Mammary epithelial cell (primary cell): ENCODE measurements at regions of chr18 and their contacts with region 1.

Region 1: GRCh38 chr18:39841482-39842365 is 2113.3 kb upstream of the PIK3C3 start:
- DNase-seq: peak; percentile 63
- H3K4me3 ChIP-seq: peak overlapping the region; percentile 63 to 76 (median 66)
- H3K27ac ChIP-seq: no peak overlapping the region
- H3K4me1 ChIP-seq: peaks cover 19% of the 10 kb centered on the region
- H3K27me3 ChIP-seq: peaks cover under 1% of the 10 kb centered on the region
- CTCF ChIP-seq: peak; percentile 28 to 74

Region 2: GRCh38 chr18:38545071-38545470 is 1296.7 kb before region 1 on chr18:
- CTCF ChIA-PET with region 1: no interaction called
- dilution Hi-C with region 1: no loop called
- in situ Hi-C with region 1: no loop called
- intact Hi-C with region 1: loop called (anchors 2 kb)
- DNase-seq: peak; percentile 77
- H3K4me3 ChIP-seq: no peak overlapping the region
- H3K27ac ChIP-seq: no peak overlapping the region
- H3K4me1 ChIP-seq: peaks cover 7% of the 10 kb centered on the region
- H3K27me3 ChIP-seq: no peaks in the 10 kb centered on the region
- CTCF ChIP-seq: peak; percentile 87 to 88

Region 3: DNA sequence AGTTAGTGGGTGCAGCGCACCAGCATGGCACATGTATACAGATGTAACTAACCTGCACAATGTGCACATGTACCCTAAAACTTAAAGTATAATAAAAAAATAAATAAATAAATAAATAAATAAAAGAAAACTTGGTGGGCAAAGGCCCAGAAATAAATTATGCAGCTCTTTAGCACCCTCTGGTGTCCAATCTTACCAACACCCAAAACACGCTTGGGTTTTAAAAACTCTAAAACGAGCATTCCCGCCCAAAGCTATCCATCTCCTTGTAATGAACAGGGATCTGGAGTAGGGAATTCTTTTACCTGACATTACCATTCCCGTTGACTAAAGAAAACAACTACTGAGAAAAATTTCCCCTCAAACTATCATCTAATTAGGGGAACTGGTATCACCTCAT is 270.2 kb before region 1 on chr18:
- CTCF ChIA-PET with region 1: no interaction called
- dilution Hi-C with region 1: no loop called
- in situ Hi-C with region 1: no loop called
- intact Hi-C with region 1: loop called (anchors 5 kb)
- DNase-seq: no peak
- H3K4me3 ChIP-seq: no peak overlapping the region
- H3K27ac ChIP-seq: no peak overlapping the region
- H3K4me1 ChIP-seq: no peaks in the 10 kb centered on the region
- H3K27me3 ChIP-seq: no peaks in the 10 kb centered on the region
- CTCF ChIP-seq: peak; percentile 12 to 47

Region 4: DNA sequence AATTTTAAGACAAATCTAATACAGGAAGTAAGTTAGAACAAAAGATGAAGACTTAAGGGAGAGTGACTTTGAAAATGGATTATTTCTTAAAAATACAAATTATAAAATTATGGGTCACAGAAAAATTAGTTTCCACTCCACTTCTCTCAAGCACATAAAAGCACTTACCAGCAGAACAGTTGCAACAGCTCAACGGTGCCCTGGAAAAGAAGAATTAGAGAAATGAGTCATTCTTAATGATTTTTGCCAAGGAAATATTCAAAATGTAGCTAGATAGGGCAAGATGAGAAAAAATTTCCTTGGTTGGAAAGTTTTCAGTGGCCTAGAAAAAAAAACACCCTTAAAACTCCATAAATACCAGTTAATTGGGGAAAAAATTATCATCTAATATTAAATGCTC is 90.6 kb before region 1 on chr18:
- CTCF ChIA-PET with region 1: interaction called, 11 read pairs
- dilution Hi-C with region 1: no loop called
- in situ Hi-C with region 1: no loop called
- intact Hi-C with region 1: no loop called
- DNase-seq: no peak
- H3K4me3 ChIP-seq: no peak overlapping the region
- H3K27ac ChIP-seq: no peak overlapping the region
- H3K4me1 ChIP-seq: no peaks in the 10 kb centered on the region
- H3K27me3 ChIP-seq: no peaks in the 10 kb centered on the region
- CTCF ChIP-seq: no peak

Region 5: DNA sequence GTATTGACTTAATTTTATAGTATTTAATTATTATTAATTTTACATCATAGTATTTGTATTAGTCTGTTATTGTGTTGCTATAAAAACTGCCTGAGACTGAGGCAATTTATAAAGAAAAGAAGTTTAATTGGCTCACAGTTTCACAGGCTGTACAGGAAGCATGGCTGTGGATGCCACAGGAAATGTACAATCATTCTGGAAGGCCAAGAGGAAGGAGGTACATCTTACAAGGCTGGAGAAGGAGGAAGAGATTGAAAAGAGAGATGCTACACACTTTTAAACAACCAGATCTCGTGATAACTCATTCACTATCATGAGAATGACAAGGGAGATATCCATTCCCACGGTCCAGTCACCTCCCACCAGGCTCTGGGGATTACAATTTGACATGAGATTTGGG is 93.9 kb after region 1 on chr18:
- CTCF ChIA-PET with region 1: no interaction called
- dilution Hi-C with region 1: no loop called
- in situ Hi-C with region 1: no loop called
- intact Hi-C with region 1: no loop called
- DNase-seq: no peak
- H3K4me3 ChIP-seq: no peak overlapping the region
- H3K27ac ChIP-seq: no peak overlapping the region
- H3K4me1 ChIP-seq: no peaks in the 10 kb centered on the region
- H3K27me3 ChIP-seq: no peaks in the 10 kb centered on the region
- CTCF ChIP-seq: no peak

Region 6: DNA sequence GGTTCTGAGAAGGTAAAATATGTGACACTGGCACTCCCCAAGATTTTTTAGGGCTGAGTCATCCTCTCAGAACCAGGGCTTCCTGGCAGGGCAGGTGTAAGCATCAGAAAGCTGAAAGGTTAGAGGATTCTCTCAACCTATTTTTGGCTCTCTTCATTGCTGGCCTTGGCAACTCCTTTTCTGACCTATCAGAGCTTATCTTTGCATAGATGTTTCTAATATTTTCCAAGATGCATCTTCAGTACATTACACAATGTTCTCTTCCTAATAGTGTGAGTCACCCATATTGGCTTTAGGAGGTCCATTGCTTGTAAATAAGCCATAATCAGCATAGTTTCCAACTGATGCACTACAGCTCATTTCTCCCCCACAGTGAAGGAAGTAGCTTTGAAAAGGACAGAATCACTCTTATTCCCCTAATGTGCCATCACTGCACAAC is 104.9 kb after region 1 on chr18:
- CTCF ChIA-PET with region 1: no interaction called
- dilution Hi-C with region 1: no loop called
- in situ Hi-C with region 1: no loop called
- intact Hi-C with region 1: no loop called
- DNase-seq: peak; percentile 85
- H3K4me3 ChIP-seq: no peak overlapping the region
- H3K27ac ChIP-seq: peak overlapping the region; percentile 85
- H3K4me1 ChIP-seq: peaks cover 34% of the 10 kb centered on the region
- H3K27me3 ChIP-seq: no peaks in the 10 kb centered on the region
- CTCF ChIP-seq: no peak

Region 7: DNA sequence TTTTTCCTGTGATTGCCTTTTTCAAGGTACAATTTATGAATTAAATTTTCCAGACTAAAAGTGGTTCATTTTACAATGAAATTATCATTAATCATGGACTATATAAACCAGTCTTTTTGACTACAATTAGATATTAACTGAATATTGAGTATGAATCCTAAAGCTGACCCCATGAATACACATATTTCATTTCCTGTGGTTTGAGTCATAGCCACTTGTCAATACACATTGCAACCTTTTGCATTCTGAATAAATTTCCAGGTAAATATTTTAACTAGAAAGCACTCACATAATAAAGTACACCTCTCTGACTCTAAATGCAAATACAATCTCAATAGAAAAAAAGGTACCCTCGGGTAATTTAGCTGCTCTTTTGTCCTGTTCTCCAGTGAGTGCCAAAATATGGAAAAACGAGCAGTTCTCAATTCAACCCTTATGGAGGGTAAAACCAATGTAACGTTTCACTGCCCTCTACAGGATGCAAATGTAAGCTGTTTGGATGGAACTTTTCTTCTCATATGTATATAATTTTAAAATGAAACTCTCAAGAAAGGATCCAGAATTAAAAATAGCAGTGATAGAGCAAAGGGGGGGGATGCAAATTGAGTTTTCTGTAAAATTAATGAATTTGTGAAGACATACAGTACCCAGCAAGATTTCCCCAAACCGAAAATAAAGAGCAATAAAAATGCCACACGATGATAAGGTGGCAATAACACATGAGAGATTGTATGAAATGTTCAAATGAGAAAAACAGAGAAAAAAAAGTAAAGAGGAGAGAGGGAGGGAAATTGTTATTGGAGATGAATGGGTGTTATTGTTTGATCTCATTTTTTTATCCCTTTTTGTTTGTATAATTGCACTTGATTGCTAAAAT is 317.7 kb after region 1 on chr18:
- CTCF ChIA-PET with region 1: no interaction called
- dilution Hi-C with region 1: no loop called
- in situ Hi-C with region 1: no loop called
- intact Hi-C with region 1: loop called (anchors 2 kb)
- DNase-seq: peak; percentile 34
- H3K4me3 ChIP-seq: no peak overlapping the region
- H3K27ac ChIP-seq: no peak overlapping the region
- H3K4me1 ChIP-seq: no peaks in the 10 kb centered on the region
- H3K27me3 ChIP-seq: no peaks in the 10 kb centered on the region
- CTCF ChIP-seq: peak; percentile 75